ENCODE measurements at regions of chr10 and their contacts with region 1.

Region 1: DNA sequence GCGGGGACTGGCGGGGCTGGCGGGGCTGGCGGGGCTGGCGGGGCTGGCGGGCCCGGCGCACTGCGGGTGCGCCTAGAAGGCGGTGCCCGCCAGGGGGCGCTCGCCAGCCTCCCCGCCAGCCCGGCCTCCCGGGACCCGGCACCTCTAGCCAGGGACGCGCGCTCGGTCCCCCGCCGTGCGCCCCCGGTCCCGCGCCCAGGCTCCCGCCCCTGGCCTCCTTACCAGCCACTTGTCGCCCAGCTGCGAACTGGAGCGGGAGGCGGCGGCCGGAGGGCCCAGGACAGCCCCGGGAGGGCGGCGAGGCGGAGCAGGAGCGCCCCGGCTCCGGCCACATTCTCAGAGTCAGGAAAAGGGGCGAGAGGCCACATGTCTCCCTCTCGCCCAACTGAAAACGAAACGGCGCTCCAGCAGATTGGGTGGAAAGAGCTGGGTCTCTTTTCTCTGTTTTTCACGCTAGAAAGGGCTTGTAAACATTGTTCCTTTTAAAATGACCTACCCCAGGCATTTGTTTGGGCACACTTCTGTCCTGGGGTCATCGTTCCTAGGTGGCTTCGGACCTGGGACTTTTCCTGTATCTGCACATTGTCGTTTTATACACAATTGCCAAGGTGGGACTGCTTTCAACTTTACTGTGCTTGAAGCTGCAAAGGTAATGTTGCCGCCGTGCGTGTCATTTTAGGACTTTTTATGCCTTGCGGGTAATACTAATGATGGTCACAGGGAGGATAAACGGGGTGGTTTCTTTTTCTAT is 378 bp upstream of the PRKCQ start:
- DNase-seq: peak; percentile 87
- H3K4me3 Mint-ChIP-seq: peak overlapping the region; percentile 87
- H3K27ac Mint-ChIP-seq: peak overlapping the region; percentile 98
- H3K4me1 Mint-ChIP-seq: peaks cover 57% of the 10 kb centered on the region
- H3K27me3 Mint-ChIP-seq: no peaks in the 10 kb centered on the region

Region 2: DNA sequence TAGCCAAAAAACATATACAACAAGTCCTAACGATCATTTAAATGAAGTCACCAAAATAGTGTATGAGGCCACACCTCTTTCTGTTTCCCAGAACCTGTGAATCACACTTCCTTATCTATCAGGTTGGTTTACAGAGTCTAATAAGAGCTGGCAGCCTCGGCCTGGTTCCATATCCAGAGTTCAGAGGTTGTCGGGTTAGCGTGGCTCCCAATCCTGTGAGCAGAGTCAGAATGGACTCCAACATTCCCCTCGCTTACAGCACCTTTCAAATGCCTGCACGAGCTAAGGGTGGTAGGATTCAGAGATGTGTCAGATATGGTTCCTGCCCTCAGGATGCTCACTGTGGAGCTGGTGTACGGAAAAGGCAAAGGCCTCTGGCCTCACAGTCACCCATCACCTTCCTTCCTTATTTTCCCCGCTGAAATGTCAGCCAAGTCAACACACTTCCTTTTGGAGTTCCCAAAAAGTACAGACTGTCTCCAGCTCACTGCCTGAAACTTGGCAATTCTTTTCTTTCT is 609.1 kb before region 1 on chr10:
- CTCF ChIA-PET with region 1: no interaction called
- POLR2A ChIA-PET with region 1: no interaction called
- DNase-seq: peak; percentile 62
- H3K4me3 Mint-ChIP-seq: peak overlapping the region; percentile 60
- H3K27ac Mint-ChIP-seq: peak overlapping the region; percentile 84
- H3K4me1 Mint-ChIP-seq: peaks cover 59% of the 10 kb centered on the region
- H3K27me3 Mint-ChIP-seq: no peaks in the 10 kb centered on the region

Region 3: DNA sequence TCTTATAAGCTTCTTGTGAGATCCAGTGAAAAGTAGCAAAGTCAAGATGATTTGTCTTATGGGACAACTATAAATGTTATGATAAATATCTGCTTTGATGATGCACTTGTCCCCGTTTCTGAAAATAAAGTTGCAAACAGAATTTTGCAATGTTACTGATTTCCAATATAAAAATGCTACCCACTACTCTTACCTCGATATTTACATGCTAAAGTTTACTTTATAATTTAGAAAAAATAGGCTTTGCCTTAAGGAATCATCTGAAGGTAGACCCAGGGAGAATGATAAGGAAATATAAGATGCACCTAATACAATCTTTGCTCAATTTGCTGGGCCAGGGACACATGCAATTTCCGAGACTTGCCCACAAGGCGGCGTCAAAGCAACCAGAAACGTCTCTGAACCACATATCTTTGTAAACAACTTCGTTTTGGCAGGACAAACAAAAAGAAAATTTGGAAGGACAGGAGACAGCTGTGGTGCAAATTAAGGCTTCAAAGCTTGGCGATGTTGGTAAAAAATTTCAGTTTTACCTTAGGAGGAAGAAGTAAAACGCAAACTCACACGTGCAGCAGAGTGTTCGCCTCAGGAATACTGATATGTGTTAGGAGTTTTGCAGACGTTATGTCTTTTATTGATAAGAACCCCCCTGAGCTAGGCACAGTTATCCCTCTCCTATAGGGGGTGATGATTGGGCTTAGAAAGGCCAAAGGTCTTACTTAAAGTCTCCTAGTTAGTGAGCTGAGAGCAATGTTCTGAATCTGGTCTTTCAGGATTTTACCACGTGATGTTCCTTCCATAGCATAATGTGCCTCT is 134.7 kb before region 1 on chr10:
- CTCF ChIA-PET with region 1: interaction called, 13 read pairs
- POLR2A ChIA-PET with region 1: interaction called, 5 read pairs
- DNase-seq: peak; percentile 78
- H3K4me3 Mint-ChIP-seq: no peak overlapping the region
- H3K27ac Mint-ChIP-seq: peak overlapping the region; percentile 3
- H3K4me1 Mint-ChIP-seq: peaks cover 47% of the 10 kb centered on the region
- H3K27me3 Mint-ChIP-seq: no peaks in the 10 kb centered on the region

Region 4: GRCh38 chr10:6498771-6499170 is 81.7 kb before region 1 on chr10:
- CTCF ChIA-PET with region 1: interaction called, 8 read pairs
- POLR2A ChIA-PET with region 1: interaction called, 65 read pairs
- DNase-seq: peak; percentile 58
- H3K4me3 Mint-ChIP-seq: peak overlapping the region; percentile 55
- H3K27ac Mint-ChIP-seq: peak overlapping the region; percentile 91
- H3K4me1 Mint-ChIP-seq: peaks cover 32% of the 10 kb centered on the region
- H3K27me3 Mint-ChIP-seq: no peaks in the 10 kb centered on the region

Region 5: DNA sequence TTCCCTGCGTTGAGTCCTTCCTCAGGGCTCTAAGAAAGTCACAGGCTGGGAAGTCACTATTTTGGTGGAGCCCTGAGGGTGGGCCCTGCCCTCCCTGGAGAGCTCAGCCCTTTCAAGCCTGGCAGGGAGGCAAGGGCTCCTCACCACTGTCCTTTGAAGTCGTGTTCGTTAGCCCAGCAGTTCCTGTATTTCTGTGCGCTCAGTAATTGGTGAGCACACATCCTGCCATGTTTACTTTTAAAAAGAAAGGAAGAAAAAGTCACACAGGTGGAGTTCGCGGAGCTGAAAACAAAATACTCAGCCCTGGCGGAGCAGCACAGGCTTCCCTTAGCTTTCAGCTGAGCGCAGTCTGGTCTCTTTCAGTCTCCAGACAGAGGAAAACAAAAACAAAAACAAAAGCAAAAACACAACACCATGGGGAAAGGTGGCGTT is 37.4 kb before region 1 on chr10:
- CTCF ChIA-PET with region 1: interaction called, 25 read pairs
- POLR2A ChIA-PET with region 1: interaction called, 123 read pairs
- DNase-seq: peak; percentile 66
- H3K4me3 Mint-ChIP-seq: peak overlapping the region; percentile 86
- H3K27ac Mint-ChIP-seq: peak overlapping the region; percentile 100
- H3K4me1 Mint-ChIP-seq: peaks cover 73% of the 10 kb centered on the region
- H3K27me3 Mint-ChIP-seq: no peaks in the 10 kb centered on the region

Region 6: DNA sequence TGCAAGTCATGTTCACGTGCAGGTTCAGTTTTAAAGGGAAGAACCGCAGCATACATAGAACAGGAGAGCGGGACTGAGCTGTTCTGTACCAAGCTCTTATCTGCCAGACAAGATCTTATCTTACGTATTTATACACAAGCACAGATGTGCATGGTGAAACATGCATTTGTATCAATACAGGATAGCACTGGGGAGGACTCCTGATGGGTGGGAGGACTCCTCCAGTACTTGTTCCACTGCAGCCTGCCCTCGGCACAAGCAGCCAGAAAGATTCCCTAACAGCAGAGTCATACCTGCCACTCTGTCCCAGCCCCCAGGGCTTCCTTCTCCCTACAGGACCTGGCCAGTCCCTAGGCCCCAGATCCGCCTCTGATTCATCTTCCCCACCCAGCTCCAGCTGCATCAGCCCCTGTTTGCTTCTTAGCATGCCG is 12.8 kb after region 1 on chr10:
- CTCF ChIA-PET with region 1: interaction called, 23 read pairs
- POLR2A ChIA-PET with region 1: interaction called, 94 read pairs
- DNase-seq: no peak
- H3K4me3 Mint-ChIP-seq: no peak overlapping the region
- H3K27ac Mint-ChIP-seq: peak overlapping the region; percentile 92
- H3K4me1 Mint-ChIP-seq: peaks cover 73% of the 10 kb centered on the region
- H3K27me3 Mint-ChIP-seq: no peaks in the 10 kb centered on the region

Region 7: GRCh38 chr10:6642876-6643275 is 62.4 kb after region 1 on chr10:
- CTCF ChIA-PET with region 1: interaction called, 31 read pairs
- POLR2A ChIA-PET with region 1: interaction called, 38 read pairs
- DNase-seq: peak; percentile 27
- H3K4me3 Mint-ChIP-seq: peak overlapping the region; percentile 36
- H3K27ac Mint-ChIP-seq: peak overlapping the region; percentile 71
- H3K4me1 Mint-ChIP-seq: peaks cover 48% of the 10 kb centered on the region
- H3K27me3 Mint-ChIP-seq: no peaks in the 10 kb centered on the region

Region 8: DNA sequence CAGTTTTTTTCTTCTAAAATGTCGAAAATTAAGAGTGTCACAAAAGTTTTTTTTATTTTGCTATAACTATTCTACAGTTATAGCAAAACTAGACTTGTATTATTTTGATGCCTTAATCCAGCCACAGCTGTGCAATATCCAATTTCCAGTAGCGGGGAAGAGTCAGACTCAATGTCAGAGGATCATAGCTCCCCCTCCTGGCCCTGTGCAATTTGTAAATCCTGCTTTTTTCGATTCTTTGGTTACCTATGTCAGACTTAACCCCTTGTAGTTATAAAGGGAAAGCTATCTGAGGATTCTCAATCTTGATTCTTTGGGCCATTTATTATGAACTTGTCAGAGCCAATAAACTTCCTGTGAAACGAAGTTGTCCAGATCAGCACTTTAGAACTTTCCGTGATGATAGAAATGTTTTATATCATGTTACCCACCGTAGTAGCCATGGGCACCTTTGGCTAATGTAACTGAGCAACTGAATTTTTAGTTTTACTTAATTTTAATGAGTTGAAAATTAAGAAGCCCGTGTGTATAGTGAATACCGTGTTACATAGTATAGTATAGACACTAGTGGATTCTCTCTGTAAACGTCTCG is 87.3 kb after region 1 on chr10:
- CTCF ChIA-PET with region 1: interaction called, 110 read pairs
- POLR2A ChIA-PET with region 1: interaction called, 64 read pairs
- DNase-seq: peak; percentile 57
- H3K4me3 Mint-ChIP-seq: no peak overlapping the region
- H3K27ac Mint-ChIP-seq: no peak overlapping the region
- H3K4me1 Mint-ChIP-seq: peaks cover 31% of the 10 kb centered on the region
- H3K27me3 Mint-ChIP-seq: peaks cover 18% of the 10 kb centered on the region

Measured in activated CD4-positive, alpha-beta memory T cell treated with anti-CD3 and anti-CD28 coated beads, Interleukin-2, amount 10 ng/mL, durations not matched to agents 7 days and 5 days (primary cell).